ENCODE measurements at regions of chr11 and their contacts with region 1.

Region 1: DNA sequence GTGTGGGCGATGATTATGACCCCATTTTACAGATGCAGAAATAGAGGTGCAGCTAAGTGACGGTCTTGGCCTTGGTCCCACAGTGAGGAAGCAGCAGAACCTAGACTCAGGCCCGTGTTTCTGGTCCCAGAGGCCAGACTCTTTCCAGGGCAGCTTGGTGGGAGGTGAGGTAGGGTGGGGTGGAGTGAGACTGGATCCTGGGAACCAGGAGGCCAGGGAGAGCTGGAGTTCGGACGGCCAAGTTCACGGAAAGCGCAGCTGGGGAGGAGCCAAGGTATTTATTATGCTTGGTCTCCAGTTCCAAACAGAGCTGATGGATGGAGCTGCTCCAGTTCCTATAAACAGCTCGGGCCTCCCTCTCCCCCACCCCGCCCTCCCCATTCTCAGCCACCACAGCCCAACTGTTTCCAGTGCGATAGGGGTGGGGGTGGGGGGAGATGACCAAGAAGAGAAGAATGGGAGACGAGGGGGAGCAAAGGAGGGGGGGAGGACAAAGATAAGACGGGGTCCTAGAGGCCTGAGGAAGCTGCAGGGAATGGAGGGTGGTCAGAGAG is 16.2 kb downstream of the LRRC32 start:
- DNase-seq: peak in 1 of 2 donors; percentile 92
- H3K4me3 ChIP-seq: peak overlapping the region in 1 of 2 donors; percentile 24
- H3K27ac ChIP-seq: peak overlapping the region; percentile 86 to 91
- H3K4me1 ChIP-seq: peaks cover 26 to 60% of the 10 kb centered on the region in 2 donors
- H3K27me3 ChIP-seq: no peaks in the 10 kb centered on the region
- CTCF ChIP-seq: no peak

Region 2: DNA sequence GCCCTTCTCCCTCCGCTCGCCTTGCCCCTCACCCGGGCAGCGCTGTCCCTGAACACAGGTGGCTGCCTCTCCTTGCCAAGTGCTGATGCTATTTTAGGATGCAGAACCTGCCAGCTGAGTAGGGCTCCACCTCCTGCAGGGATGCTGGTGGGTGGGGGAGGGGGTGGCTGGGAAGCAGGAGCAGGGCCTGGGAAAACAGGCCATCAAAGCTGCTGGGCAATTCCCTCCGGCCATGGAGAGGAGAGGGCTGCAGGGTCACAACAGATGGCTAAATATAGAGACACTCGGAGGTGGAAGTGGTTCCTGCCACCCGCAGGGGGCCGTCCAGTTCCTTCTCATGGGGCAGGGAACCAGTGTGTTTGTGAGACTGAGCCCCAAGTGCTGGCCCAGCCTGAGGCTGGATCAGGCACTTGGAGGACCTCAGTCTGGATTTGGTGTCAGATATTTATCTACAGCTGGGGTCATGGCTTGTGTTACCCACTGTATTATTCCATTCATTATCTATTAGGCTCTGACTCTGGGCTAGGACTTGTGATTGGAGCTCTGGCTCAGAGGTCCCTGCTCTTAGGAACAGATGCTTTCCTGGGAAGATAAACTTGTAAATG is 43.4 kb before region 1 on chr11:
- intact Hi-C with region 1: loop called (anchors 1 kb)
- DNase-seq: no peak
- H3K4me3 ChIP-seq: no peak overlapping the region
- H3K27ac ChIP-seq: peak overlapping the region; percentile 58 to 63
- H3K4me1 ChIP-seq: peaks cover 20 to 52% of the 10 kb centered on the region in 2 donors
- H3K27me3 ChIP-seq: no peaks in the 10 kb centered on the region
- CTCF ChIP-seq: peak in 1 of 3 experiments; percentile 38

Region 3: GRCh38 chr11:76629853-76630599 is 24.3 kb before region 1 on chr11:
- intact Hi-C with region 1: loop called (anchors 2 kb)
- DNase-seq: peak; percentile 51 to 89
- H3K4me3 ChIP-seq: peak overlapping the region in 1 of 2 donors; percentile 8
- H3K27ac ChIP-seq: peak overlapping the region; percentile 82 to 92
- H3K4me1 ChIP-seq: peaks cover 8 to 31% of the 10 kb centered on the region in 2 donors
- H3K27me3 ChIP-seq: no peaks in the 10 kb centered on the region
- CTCF ChIP-seq: peak; percentile 4 to 36 (median 10)

Measured in ascending aorta (tissue), 2 donors.